ENCODE measurements at regions of chr6 and their contacts with region 1.

Region 1: GRCh38 chr6:153023977-153024708 is 21.6 kb upstream of the MTRF1L start:
- DNase-seq: peak in 2 of 5 donors; percentile 14 to 34
- H3K4me3 ChIP-seq: no peak overlapping the region
- H3K27ac ChIP-seq: no peak overlapping the region
- H3K4me1 ChIP-seq: no peaks in the 10 kb centered on the region
- H3K27me3 ChIP-seq: no peaks in the 10 kb centered on the region
- CTCF ChIP-seq: peak; percentile 47 to 56 (median 48)
- EP300 ChIP-seq: no peak
- POLR2A ChIP-seq: no peak

Region 2: DNA sequence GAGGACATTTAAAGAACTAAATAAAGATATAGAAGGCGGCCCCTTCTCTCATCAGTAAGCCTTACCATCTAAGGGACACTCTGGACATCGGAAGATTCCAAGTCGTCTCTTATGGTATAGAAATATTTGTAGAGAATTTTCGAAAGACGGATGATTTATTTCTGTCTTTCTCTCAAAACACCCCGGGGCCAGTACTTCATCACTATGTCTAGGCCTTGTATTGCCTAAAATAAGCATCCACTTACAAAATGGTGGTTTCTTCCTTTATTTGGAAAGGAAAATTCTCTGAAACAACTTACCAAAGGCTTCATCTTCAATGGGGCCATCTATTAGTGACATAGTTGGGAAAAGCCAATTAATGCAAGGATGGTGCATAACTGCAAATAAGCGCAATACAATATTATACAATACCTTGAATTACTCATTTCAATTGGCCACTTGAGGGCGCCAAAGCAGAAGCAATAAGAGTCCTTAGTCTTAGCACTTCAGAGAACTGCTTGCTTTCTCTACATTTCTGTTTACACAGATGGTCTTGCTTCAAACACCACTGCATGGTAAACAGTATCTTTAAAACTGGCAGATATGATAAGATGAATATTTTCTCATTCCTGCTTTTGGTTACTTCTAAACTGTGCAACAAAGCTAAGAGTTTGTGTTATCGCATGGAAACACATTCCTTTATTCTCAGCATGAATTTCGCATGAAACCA is 160.4 kb before region 1 on chr6:
- intact Hi-C with region 1: loop called in 1 of 4 experiments (anchors 10 kb)
- DNase-seq: peak; percentile 27 to 67 (median 46)
- H3K4me3 ChIP-seq: no peak overlapping the region
- H3K27ac ChIP-seq: no peak overlapping the region
- H3K4me1 ChIP-seq: no peaks in the 10 kb centered on the region
- H3K27me3 ChIP-seq: no peaks in the 10 kb centered on the region
- CTCF ChIP-seq: peak in 1 of 3 donors; percentile 20
- EP300 ChIP-seq: no peak
- POLR2A ChIP-seq: no peak

Region 3: DNA sequence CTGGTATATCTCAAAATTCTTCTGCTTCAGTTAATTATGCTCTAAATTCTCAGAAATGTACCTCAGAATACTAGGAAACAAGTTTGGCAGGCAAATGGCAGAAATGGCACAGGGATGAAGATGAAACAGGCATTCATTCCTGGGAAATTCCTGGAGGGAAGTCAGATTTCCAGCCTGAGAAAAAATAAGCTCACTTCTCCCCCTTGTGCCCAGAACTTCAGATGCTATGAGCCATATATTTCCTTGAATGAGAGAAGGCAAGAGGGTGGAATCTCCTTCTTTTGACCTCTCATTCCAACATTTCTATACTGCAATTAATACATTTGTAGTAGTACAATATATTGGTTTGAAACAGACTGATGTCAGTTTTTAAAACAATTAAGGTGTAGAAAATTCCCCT is 84.2 kb after region 1 on chr6:
- intact Hi-C with region 1: loop called in 1 of 4 experiments (anchors 5 kb)
- DNase-seq: no peak
- H3K4me3 ChIP-seq: no peak overlapping the region
- H3K27ac ChIP-seq: no peak overlapping the region
- H3K4me1 ChIP-seq: no peaks in the 10 kb centered on the region
- H3K27me3 ChIP-seq: no peaks in the 10 kb centered on the region
- CTCF ChIP-seq: no peak
- EP300 ChIP-seq: no peak
- POLR2A ChIP-seq: no peak

Measured in ovary (tissue), 10 donors.